Mucosa of descending colon (tissue), 3 donors: ENCODE measurements at regions of chr1 and their contacts with region 1.

Region 1: GRCh38 chr1:172449585-172450534 is 6.0 kb upstream of the PIGC start:
- DNase-seq: peak; percentile 55 to 65 (median 56)
- ATAC-seq: peak; percentile 88
- H3K4me3 ChIP-seq: no peak overlapping the region
- H3K4me1 ChIP-seq: peaks cover 11% of the 10 kb centered on the region
- CTCF ChIP-seq: peak; percentile 67

Region 2: GRCh38 chr1:172363852-172364251 is 86.0 kb before region 1 on chr1:
- intact Hi-C with region 1: no loop called
- DNase-seq: no peak
- ATAC-seq: no peak
- H3K4me3 ChIP-seq: no peak overlapping the region
- H3K4me1 ChIP-seq: peaks cover 29% of the 10 kb centered on the region
- CTCF ChIP-seq: no peak

Region 3: DNA sequence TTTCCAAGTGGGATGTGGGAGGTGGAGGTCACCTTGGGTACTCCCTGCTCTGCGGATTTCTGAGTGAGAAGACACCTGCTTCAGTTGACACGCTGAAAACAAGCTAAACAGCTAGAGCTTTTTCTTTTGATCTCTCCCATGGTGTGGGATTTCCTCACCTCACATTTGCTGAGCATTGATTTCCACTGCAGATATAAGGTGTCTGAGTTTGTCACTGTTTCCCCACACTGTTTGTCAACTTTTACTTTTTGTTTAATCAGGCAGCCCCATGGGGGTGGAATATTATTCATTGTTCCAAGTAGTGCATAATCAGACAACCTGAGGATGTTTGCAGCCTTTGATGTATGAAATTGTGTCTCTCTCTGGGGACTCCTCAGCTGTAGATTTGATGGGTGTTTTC is 258.6 kb after region 1 on chr1:
- intact Hi-C with region 1: loop called (anchors 10 kb)
- DNase-seq: no peak
- ATAC-seq: peak; percentile 44
- H3K4me3 ChIP-seq: no peak overlapping the region
- H3K4me1 ChIP-seq: no peaks in the 10 kb centered on the region
- CTCF ChIP-seq: no peak

Region 4: DNA sequence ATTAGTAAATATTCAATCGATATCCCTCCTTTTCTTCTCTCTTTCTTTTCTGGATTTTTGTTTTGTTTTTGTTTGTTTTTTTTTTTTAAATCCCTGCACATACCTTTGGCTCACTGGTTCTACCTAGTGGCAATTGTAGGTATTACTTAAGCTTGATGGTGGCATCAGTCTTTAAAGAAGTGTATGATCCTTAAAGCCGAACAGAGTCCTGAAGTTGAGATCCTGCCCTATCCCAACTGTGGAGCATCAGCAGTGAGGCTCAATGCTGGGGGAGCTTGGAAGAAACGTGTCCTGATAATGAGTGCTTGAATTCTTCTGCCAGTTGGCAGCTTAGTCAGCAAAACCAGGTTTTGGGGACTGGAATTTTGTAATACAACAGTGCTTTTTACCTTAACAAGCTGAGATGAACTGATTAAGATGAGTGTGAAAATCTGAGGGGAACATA is 269.9 kb after region 1 on chr1:
- intact Hi-C with region 1: loop called in 1 of 2 experiments (anchors 10 kb)
- DNase-seq: peak in 1 of 3 donors; percentile 32
- ATAC-seq: peak; percentile 68
- H3K4me3 ChIP-seq: no peak overlapping the region
- H3K4me1 ChIP-seq: no peaks in the 10 kb centered on the region
- CTCF ChIP-seq: peak; percentile 61